PC-3 (cell line): ENCODE measurements at regions of chr11 and their contacts with region 1.

Region 1: DNA sequence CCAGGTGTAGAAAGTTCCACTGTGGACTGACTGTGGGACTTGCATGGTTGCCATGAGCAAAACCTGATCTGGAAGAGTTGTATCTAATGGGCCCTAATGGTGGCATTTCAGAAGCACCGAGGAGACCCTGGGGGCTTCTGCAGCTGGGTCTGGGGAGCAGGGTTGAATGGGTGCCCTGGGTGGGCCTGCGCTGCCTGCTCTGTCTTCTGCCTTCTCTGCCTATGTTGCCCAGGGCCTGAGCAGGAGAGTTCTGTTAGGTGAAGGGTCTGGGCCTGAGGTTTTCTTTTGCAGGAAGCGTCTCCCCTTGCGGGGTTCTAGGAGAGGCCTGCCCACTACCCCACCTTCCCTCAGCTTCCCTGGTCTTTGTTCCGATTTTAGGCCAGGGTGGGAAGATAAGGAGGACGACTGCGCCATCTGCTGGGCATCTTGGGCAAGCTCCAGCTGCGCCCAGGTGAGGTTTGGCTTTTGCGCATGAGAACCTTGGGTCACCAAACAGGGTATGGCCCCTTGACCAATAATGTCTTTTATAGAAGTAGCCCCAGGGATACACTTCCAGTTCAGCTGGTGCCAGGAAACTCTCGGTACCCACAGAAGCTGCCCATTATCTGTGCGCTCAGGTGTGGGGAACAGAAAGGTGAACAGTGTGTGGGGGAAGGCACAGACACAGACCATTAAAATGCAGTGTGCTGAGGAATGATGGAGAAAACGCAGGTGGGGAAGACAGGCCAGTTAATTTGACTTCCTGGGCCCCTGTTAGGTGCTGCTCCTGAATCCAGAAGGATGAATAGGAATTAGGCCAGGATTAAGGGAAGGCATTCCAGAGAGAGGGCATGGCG is 23.2 kb downstream of the COMMD9 start:
- DNase-seq: peak; percentile 70
- ATAC-seq: peak; percentile 86
- H3K4me3 ChIP-seq: no peak overlapping the region
- H3K27ac ChIP-seq: no peak overlapping the region
- H3K4me1 ChIP-seq: no peaks in the 10 kb centered on the region
- H3K27me3 ChIP-seq: no peaks in the 10 kb centered on the region
- CTCF ChIP-seq: peak; percentile 90

Region 2: GRCh38 chr11:35464308-35464707 is 801.7 kb before region 1 on chr11:
- CTCF ChIA-PET with region 1: no interaction called
- POLR2A ChIA-PET with region 1: no interaction called
- intact Hi-C with region 1: loop called (anchors 5 kb)
- DNase-seq: peak; percentile 54
- ATAC-seq: peak; percentile 95
- H3K4me3 ChIP-seq: no peak overlapping the region
- H3K27ac ChIP-seq: no peak overlapping the region
- H3K4me1 ChIP-seq: peaks cover 12% of the 10 kb centered on the region; the same call in 1 of the 2 replicates
- H3K27me3 ChIP-seq: no peaks in the 10 kb centered on the region
- CTCF ChIP-seq: peak; percentile 60

Region 3: GRCh38 chr11:36029616-36030015 is 236.4 kb before region 1 on chr11:
- CTCF ChIA-PET with region 1: no interaction called
- POLR2A ChIA-PET with region 1: no interaction called
- intact Hi-C with region 1: no loop called
- DNase-seq: no peak
- ATAC-seq: no peak
- H3K4me3 ChIP-seq: no peak overlapping the region
- H3K27ac ChIP-seq: no peak overlapping the region
- H3K4me1 ChIP-seq: peaks cover 16% of the 10 kb centered on the region
- H3K27me3 ChIP-seq: no peaks in the 10 kb centered on the region
- CTCF ChIP-seq: no peak

Region 4: GRCh38 chr11:36300651-36301050 is 34.6 kb after region 1 on chr11:
- CTCF ChIA-PET with region 1: no interaction called
- POLR2A ChIA-PET with region 1: no interaction called
- intact Hi-C with region 1: no loop called
- DNase-seq: peak; percentile 59
- ATAC-seq: peak; percentile 85
- H3K4me3 ChIP-seq: no peak overlapping the region
- H3K27ac ChIP-seq: no peak overlapping the region
- H3K4me1 ChIP-seq: peaks cover 8% of the 10 kb centered on the region; the same call in 1 of the 2 replicates
- H3K27me3 ChIP-seq: no peaks in the 10 kb centered on the region
- CTCF ChIP-seq: no peak

Region 5: GRCh38 chr11:36492724-36493304 is 226.8 kb after region 1 on chr11:
- CTCF ChIA-PET with region 1: no interaction called
- POLR2A ChIA-PET with region 1: no interaction called
- intact Hi-C with region 1: no loop called
- DNase-seq: peak; percentile 66
- ATAC-seq: peak; percentile 67
- H3K4me3 ChIP-seq: no peak overlapping the region
- H3K27ac ChIP-seq: no peak overlapping the region
- H3K4me1 ChIP-seq: no peaks in the 10 kb centered on the region
- H3K27me3 ChIP-seq: no peaks in the 10 kb centered on the region
- CTCF ChIP-seq: peak; percentile 85